Mucosa of descending colon (tissue), 3 donors: ENCODE measurements at regions of chr12 and their contacts with region 1.

Region 1: DNA sequence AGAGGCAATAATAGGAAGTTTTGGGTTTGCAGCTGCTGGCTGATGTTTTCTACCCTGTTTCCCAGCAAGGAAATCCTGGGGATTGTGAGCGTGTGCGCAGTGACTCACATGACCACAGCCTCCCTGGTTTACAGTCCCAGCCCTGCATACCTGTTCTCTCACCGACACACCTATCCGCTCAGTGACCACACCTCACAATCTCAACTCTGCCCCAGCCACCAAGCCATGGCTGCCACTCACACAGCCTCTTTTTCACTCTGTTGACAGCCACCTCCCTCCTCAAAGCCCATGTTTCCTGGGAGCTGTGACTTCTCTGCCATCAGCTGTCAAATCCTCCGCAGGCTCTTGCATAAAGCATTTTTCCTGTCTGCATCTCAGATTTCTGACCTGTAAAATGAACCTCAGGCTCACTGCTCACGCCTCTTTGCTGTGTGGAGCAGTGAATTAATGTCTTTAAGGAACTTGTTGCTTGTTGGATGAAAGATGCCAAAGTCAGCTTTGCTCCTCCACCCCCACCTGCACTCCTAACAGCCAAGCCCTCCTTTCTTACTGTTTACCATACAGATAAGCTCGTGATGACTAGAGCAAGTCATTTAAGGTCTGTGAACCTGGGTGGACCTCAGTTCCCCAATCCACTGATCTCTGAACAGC is 43.5 kb downstream of the B4GALNT3 start:
- DNase-seq: peak; percentile 82 to 87 (median 85)
- ATAC-seq: peak; percentile 95
- H3K4me3 ChIP-seq: no peak overlapping the region
- H3K4me1 ChIP-seq: peaks cover 39% of the 10 kb centered on the region
- CTCF ChIP-seq: no peak

Region 2: GRCh38 chr12:538731-539539 is 35.7 kb after region 1 on chr12:
- intact Hi-C with region 1: loop called in 1 of 2 experiments (anchors 5 kb)
- DNase-seq: peak; percentile 90 to 92 (median 92)
- ATAC-seq: peak; percentile 66
- H3K4me3 ChIP-seq: no peak overlapping the region
- H3K4me1 ChIP-seq: peaks cover 40% of the 10 kb centered on the region
- CTCF ChIP-seq: no peak

Region 3: GRCh38 chr12:553205-554000 is 50.2 kb after region 1 on chr12:
- intact Hi-C with region 1: no loop called
- DNase-seq: peak in 1 of 3 donors; percentile 65
- ATAC-seq: no peak
- H3K4me3 ChIP-seq: no peak overlapping the region
- H3K4me1 ChIP-seq: no peaks in the 10 kb centered on the region
- CTCF ChIP-seq: no peak